ENCODE measurements at regions of chr7 and their contacts with region 1.

Region 1: GRCh38 chr7:1485156-1485555 is 19.0 kb downstream of the INTS1 start:
- DNase-seq: no peak
- ATAC-seq: no peak

Region 2: DNA sequence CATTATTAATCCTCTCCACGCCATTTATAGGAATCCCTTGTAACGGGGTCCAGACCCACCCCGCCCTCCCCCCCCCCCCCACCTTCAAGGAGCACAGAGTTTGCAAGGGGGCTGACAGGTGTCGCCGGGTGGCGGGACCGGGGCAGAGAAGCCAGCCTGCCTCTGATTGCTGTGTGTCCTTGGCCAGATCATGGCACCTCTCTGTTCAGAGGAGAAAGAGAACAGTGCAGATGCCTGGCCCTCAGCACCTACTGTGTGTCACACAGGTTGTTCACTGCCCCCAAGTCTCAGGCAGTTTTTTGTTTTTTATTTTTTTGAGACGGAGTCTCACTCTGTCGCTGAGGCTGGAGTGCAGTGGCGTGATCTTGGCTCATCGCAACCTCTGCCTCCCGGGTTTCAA is 20.5 kb before region 1 on chr7:
- intact Hi-C with region 1: loop called (anchors 1 kb)
- DNase-seq: no peak
- ATAC-seq: no peak

Measured in sciatic nerve (tissue), 2 donors.